CD4-positive, alpha-beta memory T cell (primary cell): ENCODE measurements at regions of chr16 and their contacts with region 1.

Region 1: DNA sequence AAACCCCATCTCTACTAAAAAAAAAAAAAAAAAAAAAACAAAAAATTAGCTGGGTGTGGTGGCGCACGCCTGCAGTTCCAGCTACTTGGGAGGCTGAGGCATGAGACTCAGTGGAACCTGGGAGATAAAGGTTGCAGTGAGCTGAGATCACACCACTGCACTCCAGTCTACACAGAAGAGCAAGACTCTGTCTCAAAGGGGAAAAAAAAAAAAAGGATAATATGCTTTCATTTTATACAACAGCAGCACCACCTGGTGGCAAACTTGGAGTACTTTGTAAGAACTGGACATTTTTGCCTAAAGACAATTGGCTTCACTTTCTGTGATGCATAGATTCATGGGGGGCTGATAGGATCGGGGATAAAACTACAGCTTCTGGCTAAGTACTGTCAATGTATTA is 8.5 kb downstream of the CHTF8 start:
- DNase-seq: peak; percentile 64 to 75 (median 71)
- H3K4me3 ChIP-seq: no peak overlapping the region
- H3K4me3 Mint-ChIP-seq: no peak overlapping the region
- H3K27ac ChIP-seq: no peak overlapping the region
- H3K27ac Mint-ChIP-seq: peak overlapping the region in 4 of 7 donors; percentile 12 to 87 (median 64)
- H3K4me1 ChIP-seq: no peaks in the 10 kb centered on the region
- H3K4me1 Mint-ChIP-seq: peaks cover 14 to 38% (median 20%) of the 10 kb centered on the region in 4 donors
- H3K27me3 ChIP-seq: no peaks in the 10 kb centered on the region
- H3K27me3 Mint-ChIP-seq: no peaks in the 10 kb centered on the region

Region 2: DNA sequence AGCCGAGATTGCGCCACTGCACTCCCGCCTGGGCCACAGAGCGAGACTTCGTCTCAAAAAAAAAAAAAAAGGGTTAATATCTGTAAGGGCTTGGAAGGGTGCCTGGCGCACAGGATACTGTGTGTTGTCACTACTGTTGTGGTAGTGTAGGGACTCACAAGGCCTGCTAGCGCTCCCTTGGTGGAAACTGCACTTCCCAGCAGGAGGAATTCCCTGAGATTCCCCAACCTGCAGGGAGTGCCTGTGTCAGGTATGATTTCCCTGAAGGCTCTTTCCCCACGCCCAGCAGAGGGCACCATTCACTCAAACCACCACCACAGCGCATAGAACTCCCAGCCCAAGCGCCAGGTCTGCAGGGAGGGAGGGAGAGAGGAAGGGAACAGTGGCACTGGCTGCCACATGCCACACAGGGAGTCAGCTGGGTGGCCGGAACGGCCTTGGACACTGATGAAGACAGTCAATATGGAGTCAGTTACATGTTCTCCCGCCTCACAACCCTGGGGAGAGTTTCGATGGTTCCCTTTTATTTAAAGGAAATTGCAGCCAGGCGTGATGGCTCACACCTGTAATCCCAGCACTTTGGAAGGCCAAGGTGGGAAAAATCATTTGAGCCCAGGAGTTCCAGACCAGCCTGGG is 419.6 kb before region 1 on chr16:
- CTCF ChIA-PET with region 1: interaction called, 7 read pairs
- POLR2A ChIA-PET with region 1: no interaction called
- intact Hi-C with region 1: loop called (anchors 5 kb)
- DNase-seq: peak in 4 of 5 donors; percentile 17 to 41 (median 22)
- H3K4me3 ChIP-seq: no peak overlapping the region
- H3K4me3 Mint-ChIP-seq: no peak overlapping the region
- H3K27ac ChIP-seq: no peak overlapping the region
- H3K27ac Mint-ChIP-seq: no peak overlapping the region
- H3K4me1 ChIP-seq: no peaks in the 10 kb centered on the region
- H3K4me1 Mint-ChIP-seq: peaks cover 0 to 3% (median 0%) of the 10 kb centered on the region in 4 donors
- H3K27me3 ChIP-seq: no peaks in the 10 kb centered on the region
- H3K27me3 Mint-ChIP-seq: peaks cover 3 to 7% of the 10 kb centered on the region in 2 donors

Region 3: DNA sequence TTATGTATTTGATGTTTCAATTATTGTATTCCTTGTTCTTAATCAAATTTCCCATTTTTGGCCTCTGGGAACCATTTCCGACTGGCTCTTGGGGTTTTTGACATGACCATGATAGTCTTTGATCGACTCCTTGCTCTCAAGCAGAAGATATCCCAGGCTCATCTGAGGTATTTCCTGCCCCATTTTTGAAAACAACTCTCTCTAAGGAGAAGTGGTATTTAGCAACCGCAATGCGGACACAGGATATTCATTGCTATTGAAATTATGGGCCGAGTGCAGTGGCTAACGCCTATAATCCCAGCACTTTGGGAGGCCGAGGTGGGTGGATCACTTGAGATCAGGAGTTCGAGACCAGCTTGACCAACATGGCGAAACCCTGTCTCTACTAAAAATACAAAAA is 275.1 kb before region 1 on chr16:
- CTCF ChIA-PET with region 1: interaction called, 9 read pairs
- POLR2A ChIA-PET with region 1: no interaction called
- intact Hi-C with region 1: loop called (anchors 5 kb)
- DNase-seq: no peak
- H3K4me3 ChIP-seq: no peak overlapping the region
- H3K4me3 Mint-ChIP-seq: no peak overlapping the region
- H3K27ac ChIP-seq: no peak overlapping the region
- H3K27ac Mint-ChIP-seq: no peak overlapping the region
- H3K4me1 ChIP-seq: peaks cover 20% of the 10 kb centered on the region
- H3K4me1 Mint-ChIP-seq: peaks cover 21 to 31% (median 24%) of the 10 kb centered on the region in 4 donors
- H3K27me3 ChIP-seq: no peaks in the 10 kb centered on the region
- H3K27me3 Mint-ChIP-seq: no peaks in the 10 kb centered on the region

Region 4: GRCh38 chr16:69112285-69113129 is 11.4 kb before region 1 on chr16:
- CTCF ChIA-PET with region 1: interaction called, 54 read pairs
- POLR2A ChIA-PET with region 1: no interaction called
- intact Hi-C with region 1: no loop called
- DNase-seq: peak in 1 of 5 donors; percentile 34
- H3K4me3 ChIP-seq: no peak overlapping the region
- H3K4me3 Mint-ChIP-seq: no peak overlapping the region
- H3K27ac ChIP-seq: no peak overlapping the region
- H3K27ac Mint-ChIP-seq: no peak overlapping the region
- H3K4me1 ChIP-seq: peaks cover 8% of the 10 kb centered on the region
- H3K4me1 Mint-ChIP-seq: peaks cover 0 to 12% (median 6%) of the 10 kb centered on the region in 4 donors
- H3K27me3 ChIP-seq: no peaks in the 10 kb centered on the region
- H3K27me3 Mint-ChIP-seq: peaks cover 5 to 9% of the 10 kb centered on the region in 2 donors